ENCODE measurements at regions of chr18 and their contacts with region 1.

Region 1: GRCh38 chr18:59616501-59616900 is 80.7 kb downstream of the CCBE1 start:
- DNase-seq: no peak
- H3K4me3 ChIP-seq: no peak overlapping the region
- H3K27ac ChIP-seq: no peak overlapping the region
- H3K4me1 ChIP-seq: no peaks in the 10 kb centered on the region
- H3K27me3 ChIP-seq: no peaks in the 10 kb centered on the region
- CTCF ChIP-seq: no peak
- EP300 ChIP-seq: no peak
- POLR2A ChIP-seq: no peak

Region 2: DNA sequence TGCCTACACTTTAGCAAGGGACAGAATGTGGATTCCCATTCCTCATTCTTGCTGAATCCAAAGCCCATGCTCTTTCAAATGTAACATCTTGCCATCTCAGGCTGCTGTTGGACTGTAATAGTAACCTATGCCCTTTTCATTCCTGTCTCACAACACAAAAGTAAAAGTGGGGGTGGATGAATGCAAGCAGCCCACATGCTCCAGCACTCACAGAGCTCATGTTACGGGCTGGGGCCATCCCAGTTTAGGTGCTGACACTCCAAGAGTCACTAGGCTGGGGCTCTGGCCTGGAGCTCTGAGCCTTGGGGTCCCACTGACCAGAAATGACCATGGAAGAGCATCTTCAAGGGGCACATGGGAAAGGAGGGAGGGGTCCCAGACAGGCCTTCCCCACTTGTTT is 33.1 kb after region 1 on chr18:
- in situ Hi-C with region 1: no loop called
- intact Hi-C with region 1: loop called (anchors 1 kb)
- DNase-seq: no peak
- H3K4me3 ChIP-seq: no peak overlapping the region
- H3K27ac ChIP-seq: peak overlapping the region; percentile 48 to 75 (median 60)
- H3K4me1 ChIP-seq: peaks cover 0 to 5% (median 4%) of the 10 kb centered on the region in 4 donors
- H3K27me3 ChIP-seq: no peaks in the 10 kb centered on the region
- CTCF ChIP-seq: no peak
- EP300 ChIP-seq: no peak
- POLR2A ChIP-seq: no peak

Measured in transverse colon (tissue), 4 donors.